ENCODE measurements at regions of chr5 and their contacts with region 1.

Region 1: DNA sequence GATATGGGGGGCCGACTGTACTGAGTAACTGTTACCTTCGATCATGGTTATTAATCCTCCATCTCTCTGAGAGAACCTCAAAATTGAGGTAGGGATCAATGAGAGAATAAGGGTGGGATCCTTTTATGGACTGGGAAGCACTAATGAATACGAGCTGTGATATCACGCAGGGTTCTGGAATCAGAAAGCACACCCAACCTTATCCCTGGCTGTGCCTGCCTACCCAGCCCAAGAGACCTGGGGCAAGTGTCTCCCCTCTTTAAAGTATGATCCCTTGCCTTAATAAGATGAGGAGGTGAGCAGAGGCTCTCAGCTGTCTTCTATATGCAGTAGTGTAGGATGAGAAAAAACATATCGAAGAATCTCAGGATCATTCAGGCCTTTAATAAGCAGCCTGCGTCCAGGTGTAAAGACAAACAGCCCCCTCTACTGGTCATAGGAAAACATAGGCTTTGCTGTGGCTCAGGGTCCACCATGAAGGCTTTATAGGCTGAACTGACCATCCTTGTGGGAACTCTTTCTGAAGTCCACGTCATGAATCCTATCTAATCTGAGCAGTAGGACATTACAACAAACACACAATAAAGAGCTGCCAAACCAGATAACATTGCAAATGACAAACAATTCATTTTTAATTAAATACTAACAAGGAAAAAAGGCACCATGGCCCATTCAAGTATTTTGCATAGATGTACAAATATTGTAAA is 16.8 kb downstream of the NIPAL4 start:
- DNase-seq: peak; percentile 62 to 64
- H3K4me3 ChIP-seq: no peak overlapping the region
- H3K4me1 ChIP-seq: no peaks in the 10 kb centered on the region
- H3K27me3 ChIP-seq: no peaks in the 10 kb centered on the region

Region 2: DNA sequence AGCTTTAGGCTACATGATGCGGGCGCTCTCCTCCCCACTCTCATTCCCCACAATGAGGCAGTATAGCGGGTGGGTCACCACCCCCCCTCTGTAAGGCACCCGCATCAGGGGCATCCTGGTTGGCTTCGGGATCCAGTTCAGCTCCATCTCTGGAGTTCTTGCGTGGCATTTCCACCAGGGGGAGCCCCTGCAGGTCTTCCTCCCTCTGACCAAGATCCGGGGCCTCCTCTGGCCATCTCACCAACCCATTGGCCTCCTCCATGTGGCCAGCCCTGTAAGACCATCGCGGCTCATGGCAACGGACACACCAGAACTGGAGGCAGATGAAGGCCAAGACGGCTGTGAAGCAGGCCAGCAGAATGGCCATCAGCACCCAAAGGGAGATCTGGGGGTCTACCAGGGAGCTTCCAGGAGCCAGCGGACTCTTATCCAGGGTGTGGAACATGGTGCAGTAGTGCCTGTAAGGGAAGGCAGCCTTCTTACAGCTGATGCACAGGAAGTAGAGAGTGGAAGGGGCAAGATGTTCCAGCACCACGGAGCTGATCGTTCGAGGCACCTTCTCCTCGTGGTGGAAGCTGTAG is 133.9 kb before region 1 on chr5:
- in situ Hi-C with region 1: loop called (anchors 5 kb)
- DNase-seq: peak in 1 of 2 experiments; percentile 69
- H3K4me3 ChIP-seq: no peak overlapping the region
- H3K4me1 ChIP-seq: no peaks in the 10 kb centered on the region
- H3K27me3 ChIP-seq: no peaks in the 10 kb centered on the region

Region 3: DNA sequence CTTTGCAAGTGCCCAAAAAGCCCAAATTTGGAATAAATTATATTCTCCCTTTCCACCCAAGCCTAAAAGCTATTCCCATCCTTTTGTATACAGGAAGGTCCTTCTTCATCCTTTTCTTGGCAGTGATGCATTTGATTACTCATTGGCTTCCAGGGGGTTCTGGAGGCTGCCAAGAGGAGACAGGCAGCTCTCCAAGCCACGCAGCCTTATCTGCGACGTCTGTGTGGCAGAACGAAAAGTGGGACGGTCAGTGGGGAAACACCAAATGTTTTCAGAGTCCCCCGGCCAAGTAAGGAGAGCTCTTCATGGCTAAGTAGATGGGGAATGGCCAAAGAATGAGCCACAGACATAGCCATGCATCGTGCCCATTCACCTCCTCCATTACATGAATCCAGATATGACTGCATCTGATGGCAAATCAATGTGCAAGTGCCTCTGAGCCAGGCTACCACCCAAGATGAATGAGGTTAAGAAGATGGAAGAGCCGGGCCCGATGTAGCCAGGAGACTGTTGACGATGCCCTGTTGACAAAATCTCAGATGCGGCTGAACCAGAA is 86.6 kb after region 1 on chr5:
- in situ Hi-C with region 1: no loop called
- DNase-seq: no peak
- H3K4me3 ChIP-seq: no peak overlapping the region
- H3K4me1 ChIP-seq: no peaks in the 10 kb centered on the region
- H3K27me3 ChIP-seq: no peaks in the 10 kb centered on the region